ENCODE measurements at regions of chr9 and their contacts with region 1.

Region 1: DNA sequence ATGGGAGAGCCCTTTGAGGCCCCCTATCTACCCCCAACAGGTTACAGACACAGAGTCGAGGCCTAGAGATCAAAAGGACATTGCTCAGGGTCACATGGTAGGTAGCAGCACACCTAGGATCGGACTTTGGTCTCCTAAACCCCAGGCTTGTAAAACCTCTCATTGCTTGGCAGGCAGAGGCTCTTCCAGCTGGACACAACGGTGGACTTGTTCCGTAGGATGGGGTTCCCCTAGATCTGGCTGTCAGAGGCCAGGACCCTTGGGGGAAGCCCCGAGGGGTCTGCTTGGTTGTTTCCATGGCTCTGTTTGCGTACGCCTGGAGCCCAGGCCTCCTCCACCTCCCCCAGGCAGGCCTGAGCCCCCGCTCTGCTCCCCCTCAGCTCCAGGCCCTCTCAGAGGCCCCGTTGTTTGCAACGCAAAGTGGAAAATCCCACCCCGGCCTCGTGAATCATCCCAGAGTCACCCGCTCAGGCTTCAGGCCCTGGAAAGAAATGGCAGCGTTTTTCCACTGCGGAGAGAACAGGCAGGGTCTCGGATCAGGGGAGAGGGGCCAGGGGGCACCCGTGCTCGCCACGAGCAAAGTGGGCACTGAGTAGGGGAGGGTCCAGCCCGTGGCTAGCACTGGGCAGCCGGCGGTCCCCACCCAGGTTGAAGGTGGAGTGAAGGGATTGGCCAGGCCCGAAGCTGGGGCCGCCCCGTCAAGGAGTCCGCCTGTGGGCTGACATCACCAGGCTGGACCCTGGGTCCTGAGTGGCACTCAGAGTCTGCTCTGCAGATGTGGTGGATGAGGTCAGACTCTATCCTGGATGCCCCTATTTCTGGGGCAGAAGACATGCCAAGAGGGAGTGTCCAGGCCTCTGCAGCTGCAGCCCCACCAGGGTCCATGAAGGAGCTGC is 19.8 kb downstream of the COL27A1 start:
- DNase-seq: peak; percentile 45 to 73
- ATAC-seq: peak; percentile 59 to 85 (median 74)
- H3K4me3 ChIP-seq: no peak overlapping the region
- H3K27ac ChIP-seq: peak overlapping the region; percentile 3 to 91 (median 72)
- H3K4me1 ChIP-seq: peaks cover 22 to 86% (median 63%) of the 10 kb centered on the region in 9 donors
- H3K27me3 ChIP-seq: no peaks in the 10 kb centered on the region
- CTCF ChIP-seq: no peak

Region 2: DNA sequence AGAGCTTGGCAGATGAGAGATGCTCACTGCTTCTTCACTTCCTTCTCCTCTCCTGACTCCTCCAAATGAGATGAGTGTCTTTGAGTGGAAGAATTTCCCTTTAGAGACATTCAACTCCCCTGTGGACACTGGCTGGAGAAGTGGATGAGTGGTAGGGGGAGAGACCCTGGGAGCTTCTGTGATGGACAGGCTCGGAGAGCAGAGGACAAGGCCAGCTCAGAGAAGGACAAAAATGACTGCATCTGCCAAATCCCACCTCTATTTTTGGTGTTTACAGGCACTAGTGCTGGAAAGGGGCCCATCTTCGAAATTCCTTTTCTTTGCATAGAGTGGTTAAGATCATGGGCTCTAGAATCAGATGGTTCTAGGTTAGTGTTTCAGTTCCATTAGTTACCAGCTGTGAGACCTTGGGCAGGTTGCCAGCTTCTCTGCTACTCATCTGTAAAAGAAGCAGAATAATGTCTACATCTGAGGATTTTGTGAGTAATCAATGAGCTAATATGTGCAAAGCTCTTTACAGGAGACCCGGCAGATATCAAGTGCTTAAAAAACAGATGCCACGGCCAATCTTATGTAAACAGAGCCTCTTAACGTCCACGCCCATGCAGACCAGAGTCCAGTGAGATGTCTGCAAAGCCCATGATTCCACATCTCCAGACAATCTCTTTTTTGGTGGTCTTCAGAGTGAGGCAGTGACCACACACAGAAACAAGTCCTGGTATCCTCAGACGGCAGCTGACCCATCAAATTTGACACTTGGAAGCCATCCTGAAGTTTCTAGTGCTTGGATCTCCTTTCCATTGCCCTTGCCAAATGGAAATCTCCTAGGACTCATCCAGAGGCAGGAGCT is 33.3 kb before region 1 on chr9:
- intact Hi-C with region 1: no loop called
- DNase-seq: peak in 1 of 2 donors; percentile 28
- ATAC-seq: peak in 7 of 8 donors; percentile 19 to 53 (median 29)
- H3K4me3 ChIP-seq: no peak overlapping the region
- H3K27ac ChIP-seq: peak overlapping the region in 4 of 10 donors; percentile 26 to 68 (median 49)
- H3K4me1 ChIP-seq: peaks cover 7 to 41% (median 27%) of the 10 kb centered on the region in 9 donors
- H3K27me3 ChIP-seq: no peaks in the 10 kb centered on the region
- CTCF ChIP-seq: no peak

Region 3: GRCh38 chr9:114207034-114207810 is 32.1 kb after region 1 on chr9:
- intact Hi-C with region 1: loop called in 3 of 10 experiments (anchors 2 to 5 kb)
- DNase-seq: peak; percentile 71 to 81
- ATAC-seq: peak; percentile 86 to 94 (median 90)
- H3K4me3 ChIP-seq: no peak overlapping the region
- H3K27ac ChIP-seq: peak overlapping the region; percentile 35 to 90 (median 80)
- H3K4me1 ChIP-seq: peaks cover 16 to 63% (median 37%) of the 10 kb centered on the region in 9 donors
- H3K27me3 ChIP-seq: no peaks in the 10 kb centered on the region
- CTCF ChIP-seq: no peak

Region 4: DNA sequence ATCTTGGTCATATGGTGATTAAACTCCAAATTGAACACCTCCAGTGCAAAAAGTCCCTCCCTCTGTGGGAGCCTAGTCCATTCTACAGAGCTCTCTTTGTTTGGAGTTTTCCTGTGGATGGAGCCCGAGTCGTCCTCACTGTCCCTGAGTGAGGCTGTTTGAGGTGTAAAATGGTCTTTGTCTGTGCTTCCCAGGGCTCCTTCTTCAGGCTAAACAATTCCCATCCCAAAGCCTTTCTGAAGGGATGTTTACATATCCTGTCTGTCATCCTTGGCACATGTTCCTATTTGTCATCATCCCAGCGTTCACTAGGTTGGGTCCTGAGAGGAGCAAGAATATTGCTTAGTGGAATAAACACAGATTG is 49.1 kb after region 1 on chr9:
- intact Hi-C with region 1: no loop called
- DNase-seq: no peak
- ATAC-seq: peak in 6 of 8 donors; percentile 23 to 59 (median 36)
- H3K4me3 ChIP-seq: no peak overlapping the region
- H3K27ac ChIP-seq: peak overlapping the region in 2 of 10 donors; percentile 27 to 35
- H3K4me1 ChIP-seq: peaks cover 0 to 30% (median 17%) of the 10 kb centered on the region in 9 donors
- H3K27me3 ChIP-seq: no peaks in the 10 kb centered on the region
- CTCF ChIP-seq: no peak